ENCODE measurements at regions of chrX and their contacts with region 1.

Region 1: DNA sequence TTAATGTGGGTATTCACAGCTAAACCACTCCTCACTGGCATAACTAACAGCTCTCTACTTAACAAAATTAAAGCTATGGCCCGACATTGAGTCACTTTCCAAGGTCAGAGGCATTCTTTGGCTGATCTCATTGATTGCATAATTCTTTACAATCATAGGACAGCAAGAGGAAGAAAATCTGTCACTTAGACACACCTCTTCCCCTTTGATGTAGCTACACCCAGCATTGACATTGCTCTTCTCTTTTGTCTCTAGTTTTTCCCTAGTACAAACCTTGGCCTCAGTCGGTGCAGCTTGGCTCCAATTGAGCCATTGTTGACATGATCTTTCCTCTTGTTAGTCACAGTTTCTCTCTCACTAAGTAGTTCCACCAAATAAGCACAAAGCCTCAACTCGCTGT is 313.3 kb upstream of the ACTRT1 start:
- DNase-seq: no peak
- H3K4me3 ChIP-seq: no peak overlapping the region
- H3K27ac ChIP-seq: no peak overlapping the region
- H3K4me1 ChIP-seq: no peaks in the 10 kb centered on the region
- H3K27me3 ChIP-seq: no peaks in the 10 kb centered on the region
- CTCF ChIP-seq: no peak
- EP300 ChIP-seq: no peak
- POLR2A ChIP-seq: no peak

Region 2: GRCh38 chrX:128142745-128143144 is 222.7 kb before region 1 on chrX:
- in situ Hi-C with region 1: no loop called
- intact Hi-C with region 1: no loop called
- DNase-seq: no peak
- H3K4me3 ChIP-seq: no peak overlapping the region
- H3K27ac ChIP-seq: no peak overlapping the region
- H3K4me1 ChIP-seq: no peaks in the 10 kb centered on the region
- H3K27me3 ChIP-seq: no peaks in the 10 kb centered on the region
- CTCF ChIP-seq: no peak
- EP300 ChIP-seq: no peak
- POLR2A ChIP-seq: no peak

Region 3: GRCh38 chrX:128251565-128251964 is 113.9 kb before region 1 on chrX:
- in situ Hi-C with region 1: loop called in 1 of 4 experiments (anchors 25 kb)
- intact Hi-C with region 1: no loop called
- DNase-seq: no peak
- H3K4me3 ChIP-seq: no peak overlapping the region
- H3K27ac ChIP-seq: no peak overlapping the region
- H3K4me1 ChIP-seq: no peaks in the 10 kb centered on the region
- H3K27me3 ChIP-seq: no peaks in the 10 kb centered on the region
- CTCF ChIP-seq: no peak
- EP300 ChIP-seq: no peak
- POLR2A ChIP-seq: no peak

Measured in transverse colon (tissue), 4 donors.